T-cell (primary cell): ENCODE measurements at regions of chr2 and their contacts with region 1.

Region 1: DNA sequence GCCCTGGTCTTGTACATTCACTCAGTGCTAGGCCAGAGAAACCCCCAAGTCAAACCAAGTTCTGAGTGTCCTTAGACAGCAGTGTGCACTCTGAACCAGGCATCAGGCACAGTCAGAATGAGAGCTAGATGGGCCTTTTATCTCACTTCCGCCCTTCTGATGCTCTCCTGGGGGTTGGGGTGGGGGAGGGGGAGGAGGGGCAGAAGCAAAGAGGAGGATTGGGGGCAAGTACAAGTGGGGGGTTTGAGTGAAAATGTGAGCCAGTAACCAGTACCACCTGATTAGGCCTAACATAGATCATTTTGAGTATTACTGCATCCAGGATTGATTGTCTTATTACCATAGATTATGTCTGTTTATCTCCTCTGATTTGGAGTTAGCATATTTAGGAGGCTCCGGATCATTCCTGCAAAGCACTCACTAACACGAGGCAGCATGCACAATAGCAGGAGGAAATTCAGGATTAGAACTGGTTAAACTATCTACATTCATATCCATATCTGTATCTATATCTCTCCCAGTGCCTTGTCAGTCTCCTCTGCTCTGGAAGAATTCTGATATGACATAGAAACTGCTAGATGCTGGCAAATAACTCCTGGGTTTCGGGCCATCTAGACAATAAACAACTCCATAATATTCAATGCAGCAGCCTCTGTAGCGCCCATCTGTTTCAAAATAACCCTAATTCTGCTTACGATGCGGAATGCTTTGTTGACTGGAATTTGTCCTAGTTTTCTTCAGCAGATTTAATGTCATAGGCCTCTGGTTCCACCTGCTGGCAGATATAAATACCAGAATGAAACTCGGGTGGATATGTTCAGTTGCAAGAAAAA is 149.1 kb downstream of the RHBDD1 start:
- DNase-seq: peak in 12 of 35 experiments; percentile 4 to 57 (median 14)
- ATAC-seq: peak; percentile 41 to 87 (median 76)
- H3K4me3 ChIP-seq: no peak overlapping the region
- H3K4me3 Mint-ChIP-seq: no peak overlapping the region
- H3K27ac ChIP-seq: no peak overlapping the region
- H3K27ac Mint-ChIP-seq: peak overlapping the region in 1 of 2 donors; percentile 58
- H3K4me1 ChIP-seq: peaks cover 7 to 8% of the 10 kb centered on the region in 2 experiments
- H3K4me1 Mint-ChIP-seq: peaks cover 22 to 30% (median 24%) of the 10 kb centered on the region in 3 donors
- H3K27me3 ChIP-seq: no peaks in the 10 kb centered on the region
- H3K27me3 Mint-ChIP-seq: no peaks in the 10 kb centered on the region

Region 2: GRCh38 chr2:225328160-225328559 is 1656.8 kb before region 1 on chr2:
- CTCF ChIA-PET with region 1: no interaction called
- POLR2A ChIA-PET with region 1: no interaction called
- DNase-seq: no peak
- ATAC-seq: no peak
- H3K4me3 ChIP-seq: no peak overlapping the region
- H3K4me3 Mint-ChIP-seq: no peak overlapping the region
- H3K27ac ChIP-seq: no peak overlapping the region
- H3K27ac Mint-ChIP-seq: no peak overlapping the region
- H3K4me1 ChIP-seq: no peaks in the 10 kb centered on the region
- H3K4me1 Mint-ChIP-seq: no peaks in the 10 kb centered on the region
- H3K27me3 ChIP-seq: no peaks in the 10 kb centered on the region
- H3K27me3 Mint-ChIP-seq: peaks cover 10 to 11% of the 10 kb centered on the region in 2 donors

Region 3: GRCh38 chr2:226295123-226295522 is 689.8 kb before region 1 on chr2:
- CTCF ChIA-PET with region 1: interaction called in 1 of 2 experiments, 11 read pairs
- POLR2A ChIA-PET with region 1: no interaction called
- DNase-seq: no peak
- ATAC-seq: no peak
- H3K4me3 ChIP-seq: no peak overlapping the region
- H3K4me3 Mint-ChIP-seq: no peak overlapping the region
- H3K27ac ChIP-seq: no peak overlapping the region
- H3K27ac Mint-ChIP-seq: no peak overlapping the region
- H3K4me1 ChIP-seq: no peaks in the 10 kb centered on the region
- H3K4me1 Mint-ChIP-seq: no peaks in the 10 kb centered on the region
- H3K27me3 ChIP-seq: no peaks in the 10 kb centered on the region
- H3K27me3 Mint-ChIP-seq: peaks cover 10 to 16% of the 10 kb centered on the region in 2 donors

Region 4: DNA sequence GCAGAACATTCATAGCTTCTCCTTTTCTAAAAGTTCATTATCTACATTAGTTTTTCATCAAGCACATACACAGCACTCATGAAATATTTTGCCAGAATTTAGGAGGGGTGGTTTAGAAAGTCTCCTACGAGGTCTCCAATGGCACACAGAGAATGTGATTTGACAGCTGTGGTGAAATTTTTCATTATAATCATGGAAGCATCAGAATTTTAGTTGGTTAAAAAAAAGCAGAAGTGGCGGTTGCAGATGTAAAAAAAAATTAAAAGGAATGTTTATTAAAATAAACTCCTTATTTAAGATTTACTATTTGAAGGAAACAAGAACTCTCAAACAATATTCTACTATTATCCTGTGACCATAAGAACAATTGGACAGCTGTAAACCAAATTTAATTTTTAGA is 159.9 kb before region 1 on chr2:
- CTCF ChIA-PET with region 1: interaction called in 1 of 2 experiments, 10 read pairs
- POLR2A ChIA-PET with region 1: no interaction called
- DNase-seq: no peak
- ATAC-seq: no peak
- H3K4me3 ChIP-seq: no peak overlapping the region
- H3K4me3 Mint-ChIP-seq: no peak overlapping the region
- H3K27ac ChIP-seq: no peak overlapping the region
- H3K27ac Mint-ChIP-seq: no peak overlapping the region
- H3K4me1 ChIP-seq: no peaks in the 10 kb centered on the region
- H3K4me1 Mint-ChIP-seq: no peaks in the 10 kb centered on the region
- H3K27me3 ChIP-seq: no peaks in the 10 kb centered on the region
- H3K27me3 Mint-ChIP-seq: no peaks in the 10 kb centered on the region

Region 5: DNA sequence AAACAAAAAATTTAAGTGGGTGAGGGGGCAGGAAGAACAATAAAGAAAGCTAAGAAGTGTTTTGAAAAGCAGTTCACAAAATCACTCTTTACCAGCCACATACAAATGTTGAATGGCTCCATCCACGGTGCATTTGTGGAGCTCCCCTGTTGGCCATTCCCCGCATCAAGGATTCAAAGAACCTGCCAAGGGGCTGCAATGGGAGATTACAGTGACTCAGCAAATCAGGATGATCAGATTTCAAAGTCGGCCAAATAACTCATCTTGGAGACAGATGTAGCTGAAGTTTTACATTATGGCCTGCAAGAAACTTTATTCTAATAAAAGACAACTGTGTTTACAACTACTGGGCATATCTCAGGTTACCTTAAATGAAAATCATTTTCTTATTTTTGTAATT is 206.4 kb after region 1 on chr2:
- CTCF ChIA-PET with region 1: no interaction called
- POLR2A ChIA-PET with region 1: no interaction called
- DNase-seq: no peak
- ATAC-seq: no peak
- H3K4me3 ChIP-seq: no peak overlapping the region
- H3K4me3 Mint-ChIP-seq: no peak overlapping the region
- H3K27ac ChIP-seq: no peak overlapping the region
- H3K27ac Mint-ChIP-seq: no peak overlapping the region
- H3K4me1 ChIP-seq: no peaks in the 10 kb centered on the region
- H3K4me1 Mint-ChIP-seq: no peaks in the 10 kb centered on the region
- H3K27me3 ChIP-seq: peaks cover 0 to 5% of the 10 kb centered on the region in 2 experiments
- H3K27me3 Mint-ChIP-seq: peaks cover 22 to 36% of the 10 kb centered on the region in 2 donors

Region 6: GRCh38 chr2:227308784-227309183 is 323.8 kb after region 1 on chr2:
- CTCF ChIA-PET with region 1: interaction called in 1 of 2 experiments, 13 read pairs
- POLR2A ChIA-PET with region 1: no interaction called
- DNase-seq: no peak
- ATAC-seq: no peak
- H3K4me3 ChIP-seq: no peak overlapping the region
- H3K4me3 Mint-ChIP-seq: no peak overlapping the region
- H3K27ac ChIP-seq: no peak overlapping the region
- H3K27ac Mint-ChIP-seq: no peak overlapping the region
- H3K4me1 ChIP-seq: no peaks in the 10 kb centered on the region
- H3K4me1 Mint-ChIP-seq: no peaks in the 10 kb centered on the region
- H3K27me3 ChIP-seq: no peaks in the 10 kb centered on the region
- H3K27me3 Mint-ChIP-seq: peaks cover 0 to 3% of the 10 kb centered on the region in 2 donors

Region 7: DNA sequence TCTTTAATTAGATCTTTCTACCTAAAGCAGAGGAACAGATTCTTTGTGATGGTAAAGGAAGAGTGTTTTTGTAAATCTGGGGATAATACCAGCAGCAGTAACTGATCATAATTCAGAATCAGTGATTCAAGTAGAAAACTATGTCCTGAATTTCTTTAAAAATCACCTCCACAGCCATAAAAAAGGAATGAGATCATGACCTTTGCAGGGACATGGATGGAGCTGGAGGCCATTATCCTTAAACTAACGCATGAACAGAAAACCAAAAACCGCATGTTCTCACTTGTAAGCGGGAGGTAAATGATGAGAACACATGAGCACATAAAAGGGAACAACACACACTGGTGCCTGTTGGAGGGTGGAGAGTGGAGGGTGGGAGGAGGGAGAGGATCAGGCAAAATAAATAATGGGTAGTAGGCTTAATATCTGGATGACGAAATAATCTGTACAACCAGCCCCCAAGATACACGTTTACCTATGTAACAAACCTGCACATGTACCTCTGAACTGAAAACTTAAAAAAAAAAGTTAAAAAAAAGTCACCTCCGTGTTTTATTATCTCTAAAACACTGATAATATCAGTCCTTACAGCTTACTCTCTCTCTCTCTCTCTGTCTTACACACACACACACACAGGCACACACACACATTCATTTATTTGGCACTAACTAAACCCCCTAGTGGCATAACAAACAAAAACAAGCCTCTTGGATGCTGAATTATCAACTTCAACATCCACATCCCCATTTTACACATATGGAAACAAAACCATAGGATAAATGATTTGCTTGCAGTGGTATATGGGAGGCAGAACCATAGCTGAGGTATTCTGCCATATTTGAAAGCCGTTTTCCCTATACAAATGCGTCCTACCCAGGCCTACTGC is 392.7 kb after region 1 on chr2:
- CTCF ChIA-PET with region 1: no interaction called
- POLR2A ChIA-PET with region 1: no interaction called
- DNase-seq: no peak
- ATAC-seq: no peak
- H3K4me3 ChIP-seq: no peak overlapping the region
- H3K4me3 Mint-ChIP-seq: no peak overlapping the region
- H3K27ac ChIP-seq: no peak overlapping the region
- H3K27ac Mint-ChIP-seq: no peak overlapping the region
- H3K4me1 ChIP-seq: no peaks in the 10 kb centered on the region
- H3K4me1 Mint-ChIP-seq: peaks cover 4 to 8% (median 8%) of the 10 kb centered on the region in 3 donors
- H3K27me3 ChIP-seq: peaks cover 0 to 7% of the 10 kb centered on the region in 2 experiments
- H3K27me3 Mint-ChIP-seq: peaks cover 10 to 13% of the 10 kb centered on the region in 2 donors

Region 8: DNA sequence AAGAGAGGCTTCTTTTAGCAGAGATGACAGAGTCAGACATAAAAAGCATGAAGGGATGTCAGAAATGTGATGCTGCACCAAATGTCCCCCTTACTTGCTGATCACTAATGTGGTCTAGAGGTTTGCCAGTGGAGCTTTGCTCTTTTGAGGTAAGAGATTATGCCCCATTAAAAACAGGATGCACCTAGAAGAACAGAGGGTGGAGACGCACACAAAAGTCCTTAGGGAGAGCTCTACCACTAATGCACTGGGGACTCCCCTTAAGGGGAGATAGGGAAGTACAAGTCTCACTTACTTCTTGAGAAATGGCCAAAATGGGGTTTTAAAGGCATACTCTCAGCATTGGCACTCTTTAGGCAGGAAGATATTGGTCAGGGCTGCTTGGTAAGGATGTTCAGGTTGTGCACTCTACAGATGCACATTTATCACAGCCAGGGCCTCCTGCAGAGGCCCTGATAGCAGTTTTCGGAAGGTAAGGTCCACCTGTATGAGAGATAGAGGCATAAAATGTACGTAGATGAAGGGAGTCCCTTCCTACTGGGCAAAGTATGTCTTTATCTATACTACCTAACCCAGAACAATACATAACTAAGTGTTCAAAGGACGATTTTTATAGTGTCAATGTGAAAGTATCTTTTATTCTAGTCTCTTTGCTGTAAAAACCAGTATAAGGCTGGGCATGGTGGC is 419.8 kb after region 1 on chr2:
- CTCF ChIA-PET with region 1: no interaction called
- POLR2A ChIA-PET with region 1: interaction called in 1 of 2 experiments, 10 read pairs
- DNase-seq: peak in 8 of 35 experiments; percentile 1 to 37 (median 10)
- ATAC-seq: peak in 3 of 4 experiments; percentile 40 to 91 (median 60)
- H3K4me3 ChIP-seq: no peak overlapping the region
- H3K4me3 Mint-ChIP-seq: no peak overlapping the region
- H3K27ac ChIP-seq: no peak overlapping the region
- H3K27ac Mint-ChIP-seq: no peak overlapping the region
- H3K4me1 ChIP-seq: peaks cover 0 to 2% of the 10 kb centered on the region in 2 experiments
- H3K4me1 Mint-ChIP-seq: peaks cover 19 to 24% (median 19%) of the 10 kb centered on the region in 3 donors
- H3K27me3 ChIP-seq: peaks cover 0 to 3% of the 10 kb centered on the region in 2 experiments
- H3K27me3 Mint-ChIP-seq: no peaks in the 10 kb centered on the region